Activated CD4-positive, alpha-beta T cell treated with anti-CD3 and anti-CD28 coated beads, Interleukin-2, amount 10 ng/mL, durations not matched to agents 24 days and 14 days (primary cell): ENCODE measurements at regions of chr22 and their contacts with region 1.

Region 1: GRCh38 chr22:37817705-37818408 is 5.3 kb upstream of the GALR3 start:
- DNase-seq: peak; percentile 96
- H3K4me3 Mint-ChIP-seq: peak overlapping the region; percentile 56
- H3K27ac Mint-ChIP-seq: no peak overlapping the region
- H3K4me1 Mint-ChIP-seq: peaks cover 8% of the 10 kb centered on the region
- H3K27me3 Mint-ChIP-seq: peaks cover 23% of the 10 kb centered on the region

Region 2: DNA sequence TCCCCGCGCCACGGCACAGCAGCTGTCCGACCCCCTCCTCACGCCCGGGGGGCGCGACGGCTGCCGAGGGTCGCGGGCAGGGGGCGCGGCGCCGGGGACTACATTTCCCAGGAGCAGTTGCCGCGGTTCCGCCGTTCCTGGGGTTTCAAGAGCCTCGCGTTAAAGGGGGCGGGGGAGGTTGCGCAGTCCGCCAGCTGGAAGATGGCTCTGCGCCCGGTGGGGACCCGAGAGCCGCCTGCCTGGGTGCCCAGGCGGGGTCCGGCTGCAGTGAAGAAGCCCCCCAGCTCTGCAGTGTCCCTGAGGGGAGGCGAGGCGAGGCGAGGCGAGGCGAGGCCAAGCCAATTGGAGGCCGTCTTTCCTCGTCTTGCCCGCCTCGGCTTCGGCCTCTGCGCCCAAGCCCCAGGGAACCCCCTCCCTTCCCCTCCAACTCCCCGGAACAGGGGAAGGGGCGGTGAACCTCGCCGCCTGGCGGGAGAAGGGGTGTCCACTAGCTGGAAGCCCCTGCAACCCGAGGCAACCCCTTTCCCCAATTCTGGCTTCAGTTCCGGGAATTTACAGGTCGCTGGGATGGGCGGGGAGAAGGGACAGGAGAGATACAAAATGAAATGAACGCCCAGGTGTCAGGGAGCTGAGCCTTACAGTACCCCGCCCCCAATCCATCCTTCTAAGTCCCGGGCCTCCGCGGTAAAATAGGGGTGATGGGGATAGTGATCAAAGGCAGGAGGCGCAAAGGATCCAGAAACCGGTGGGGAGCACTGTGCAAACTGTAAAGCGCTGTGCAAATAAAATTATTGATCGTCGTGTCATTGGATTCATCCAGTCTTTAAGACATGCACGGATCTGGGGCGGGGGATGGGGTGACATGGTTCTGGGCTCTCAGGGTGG is 15.3 kb before region 1 on chr22:
- intact Hi-C with region 1: loop called (anchors 1 kb)
- DNase-seq: peak; percentile 77
- H3K4me3 Mint-ChIP-seq: peak overlapping the region; percentile 83
- H3K27ac Mint-ChIP-seq: peak overlapping the region; percentile 9
- H3K4me1 Mint-ChIP-seq: peaks cover 36% of the 10 kb centered on the region
- H3K27me3 Mint-ChIP-seq: peaks cover 37% of the 10 kb centered on the region

Region 3: GRCh38 chr22:37807410-37808293 is 10.2 kb before region 1 on chr22 and contains the start of gene GCAT:
- intact Hi-C with region 1: loop called (anchors 1 kb)
- DNase-seq: peak; percentile 97
- H3K4me3 Mint-ChIP-seq: peak within 1 kb of the TSS; percentile 94
- H3K27ac Mint-ChIP-seq: peak within 1 kb of the TSS; percentile 15
- H3K4me1 Mint-ChIP-seq: peaks cover 36% of the 10 kb centered on the region
- H3K27me3 Mint-ChIP-seq: peaks cover 23% of the 10 kb centered on the region
- total RNA-seq, gene GCAT: 27.7 and 28.9 TPM in 2 replicates

Region 4: DNA sequence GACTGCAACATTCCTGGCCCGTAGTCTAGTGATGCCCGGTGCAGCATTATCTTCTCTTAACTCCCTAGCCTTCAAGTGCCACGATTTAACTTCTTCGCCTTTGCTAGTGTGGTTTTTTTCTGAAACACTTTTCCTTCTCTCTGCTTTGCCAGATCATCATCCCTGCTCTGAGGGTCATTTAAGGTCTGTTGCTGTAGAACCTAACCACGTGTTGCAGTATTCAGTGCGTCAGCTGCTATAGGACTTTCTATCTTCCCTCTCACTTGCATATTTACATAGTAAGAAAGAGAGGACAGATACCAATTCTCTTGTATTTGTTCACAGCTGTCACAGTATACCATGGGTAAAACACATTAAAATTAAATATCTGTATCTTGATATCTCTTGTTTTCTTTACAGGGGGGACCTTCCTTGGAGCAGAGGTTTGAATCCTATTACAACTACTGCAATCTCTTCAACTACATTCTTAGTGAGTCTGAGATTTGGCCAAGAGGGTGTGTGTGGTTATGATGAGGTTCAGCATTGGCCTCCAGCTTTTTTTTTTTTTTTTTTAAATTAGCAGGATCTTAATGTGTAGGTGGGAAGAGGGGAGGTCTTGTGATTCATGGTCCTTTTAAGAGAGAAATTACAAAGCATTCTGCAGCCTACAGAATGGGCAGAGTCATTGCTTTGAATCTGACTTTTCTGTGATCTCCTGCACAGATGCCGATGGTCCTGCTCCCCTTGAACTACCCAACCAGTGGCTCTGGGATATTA is 44.9 kb after region 1 on chr22:
- intact Hi-C with region 1: loop called (anchors 1 kb)
- DNase-seq: no peak
- H3K4me3 Mint-ChIP-seq: no peak overlapping the region
- H3K27ac Mint-ChIP-seq: no peak overlapping the region
- H3K4me1 Mint-ChIP-seq: peaks cover 5% of the 10 kb centered on the region
- H3K27me3 Mint-ChIP-seq: no peaks in the 10 kb centered on the region

Region 5: GRCh38 chr22:37933711-37934376 is 116.0 kb after region 1 on chr22:
- intact Hi-C with region 1: loop called (anchors 1 kb)
- DNase-seq: peak; percentile 96
- H3K4me3 Mint-ChIP-seq: no peak overlapping the region
- H3K27ac Mint-ChIP-seq: peak overlapping the region; percentile 51
- H3K4me1 Mint-ChIP-seq: peaks cover 9% of the 10 kb centered on the region
- H3K27me3 Mint-ChIP-seq: no peaks in the 10 kb centered on the region